CD8-positive, alpha-beta T cell (primary cell): ENCODE measurements at regions of chr10 and their contacts with region 1.

Region 1: GRCh38 chr10:43315535-43316207 is 48.8 kb upstream of the RASGEF1A start:
- DNase-seq: no peak
- ATAC-seq: no peak
- H3K4me3 ChIP-seq: no peak overlapping the region
- H3K4me3 Mint-ChIP-seq: no peak overlapping the region
- H3K27ac ChIP-seq: no peak overlapping the region
- H3K27ac Mint-ChIP-seq: no peak overlapping the region
- H3K4me1 ChIP-seq: no peaks in the 10 kb centered on the region
- H3K4me1 Mint-ChIP-seq: peaks cover 2% of the 10 kb centered on the region
- H3K27me3 ChIP-seq: no peaks in the 10 kb centered on the region
- H3K27me3 Mint-ChIP-seq: peaks cover 4% of the 10 kb centered on the region
- CTCF ChIP-seq: no peak

Region 2: DNA sequence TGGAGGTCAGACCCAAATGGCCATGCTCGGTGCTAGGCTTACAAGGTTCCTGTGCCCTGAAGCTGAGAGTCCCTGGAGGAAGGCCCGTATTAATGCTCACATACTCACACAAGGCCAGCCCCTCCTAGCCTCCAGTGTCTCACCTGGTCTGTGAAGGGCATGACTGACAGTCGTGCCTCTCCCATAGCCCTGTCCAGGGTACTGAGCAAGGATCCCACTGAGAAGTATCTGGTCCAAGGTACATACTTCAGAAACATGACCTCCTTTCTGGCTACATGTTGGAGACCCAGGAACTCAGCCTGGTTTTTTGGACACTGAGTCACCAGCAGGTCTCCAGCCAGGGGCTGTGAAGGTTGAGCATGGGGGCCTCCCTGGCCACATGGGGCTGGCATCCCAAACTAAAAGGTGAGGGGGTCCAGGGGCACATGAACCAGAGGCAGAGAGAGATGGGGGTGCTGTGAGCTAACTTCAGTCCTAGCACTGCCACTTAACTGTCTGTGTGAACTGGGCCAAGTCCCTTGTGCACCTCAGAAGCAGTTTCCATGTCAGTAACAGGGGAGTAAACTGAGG is 31.2 kb before region 1 on chr10:
- CTCF ChIA-PET with region 1: no interaction called
- POLR2A ChIA-PET with region 1: no interaction called
- intact Hi-C with region 1: no loop called
- DNase-seq: peak in 2 of 9 experiments; percentile 26 to 38
- ATAC-seq: peak; percentile 27
- H3K4me3 ChIP-seq: no peak overlapping the region
- H3K4me3 Mint-ChIP-seq: no peak overlapping the region
- H3K27ac ChIP-seq: no peak overlapping the region
- H3K27ac Mint-ChIP-seq: no peak overlapping the region
- H3K4me1 ChIP-seq: peaks cover 24% of the 10 kb centered on the region
- H3K4me1 Mint-ChIP-seq: peaks cover 32% of the 10 kb centered on the region
- H3K27me3 ChIP-seq: no peaks in the 10 kb centered on the region
- H3K27me3 Mint-ChIP-seq: peaks cover 3% of the 10 kb centered on the region
- CTCF ChIP-seq: no peak

Region 3: DNA sequence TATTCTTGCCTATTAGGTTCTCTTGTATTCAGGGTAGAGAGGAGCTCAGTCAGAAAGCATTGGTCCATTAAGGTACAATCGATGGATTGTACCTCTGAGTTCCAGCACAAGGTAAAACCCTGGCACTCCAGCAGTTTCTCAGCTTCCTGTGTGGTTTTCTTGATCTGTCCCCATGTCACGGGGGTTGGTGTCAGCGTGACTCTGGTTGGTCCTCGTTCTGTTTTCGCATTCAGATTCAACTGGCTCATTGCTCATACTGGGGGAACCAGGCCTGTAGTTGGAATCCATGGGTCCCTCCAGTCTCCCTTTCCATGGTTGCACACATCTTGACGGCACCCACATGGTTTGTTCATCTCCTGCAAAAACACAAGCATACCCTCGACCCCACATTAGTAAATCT is 16.1 kb before region 1 on chr10:
- CTCF ChIA-PET with region 1: no interaction called
- POLR2A ChIA-PET with region 1: no interaction called
- intact Hi-C with region 1: loop called in 1 of 2 experiments (anchors 2 kb)
- DNase-seq: peak in 8 of 9 experiments; percentile 30 to 73 (median 54)
- ATAC-seq: peak; percentile 74
- H3K4me3 ChIP-seq: no peak overlapping the region
- H3K4me3 Mint-ChIP-seq: no peak overlapping the region
- H3K27ac ChIP-seq: peak overlapping the region in 1 of 2 experiments; percentile 41
- H3K27ac Mint-ChIP-seq: peak overlapping the region; percentile 80
- H3K4me1 ChIP-seq: peaks cover 34% of the 10 kb centered on the region
- H3K4me1 Mint-ChIP-seq: peaks cover 58% of the 10 kb centered on the region
- H3K27me3 ChIP-seq: no peaks in the 10 kb centered on the region
- H3K27me3 Mint-ChIP-seq: no peaks in the 10 kb centered on the region
- CTCF ChIP-seq: no peak

Region 4: GRCh38 chr10:43336641-43337318 is 21.1 kb after region 1 on chr10:
- CTCF ChIA-PET with region 1: no interaction called
- POLR2A ChIA-PET with region 1: no interaction called
- intact Hi-C with region 1: no loop called
- DNase-seq: no peak
- ATAC-seq: no peak
- H3K4me3 ChIP-seq: no peak overlapping the region
- H3K4me3 Mint-ChIP-seq: no peak overlapping the region
- H3K27ac ChIP-seq: no peak overlapping the region
- H3K27ac Mint-ChIP-seq: no peak overlapping the region
- H3K4me1 ChIP-seq: peaks cover 12% of the 10 kb centered on the region
- H3K4me1 Mint-ChIP-seq: peaks cover 14% of the 10 kb centered on the region
- H3K27me3 ChIP-seq: no peaks in the 10 kb centered on the region
- H3K27me3 Mint-ChIP-seq: peaks cover 17% of the 10 kb centered on the region
- CTCF ChIP-seq: no peak